ENCODE measurements at regions of chr12 and their contacts with region 1.

Region 1: DNA sequence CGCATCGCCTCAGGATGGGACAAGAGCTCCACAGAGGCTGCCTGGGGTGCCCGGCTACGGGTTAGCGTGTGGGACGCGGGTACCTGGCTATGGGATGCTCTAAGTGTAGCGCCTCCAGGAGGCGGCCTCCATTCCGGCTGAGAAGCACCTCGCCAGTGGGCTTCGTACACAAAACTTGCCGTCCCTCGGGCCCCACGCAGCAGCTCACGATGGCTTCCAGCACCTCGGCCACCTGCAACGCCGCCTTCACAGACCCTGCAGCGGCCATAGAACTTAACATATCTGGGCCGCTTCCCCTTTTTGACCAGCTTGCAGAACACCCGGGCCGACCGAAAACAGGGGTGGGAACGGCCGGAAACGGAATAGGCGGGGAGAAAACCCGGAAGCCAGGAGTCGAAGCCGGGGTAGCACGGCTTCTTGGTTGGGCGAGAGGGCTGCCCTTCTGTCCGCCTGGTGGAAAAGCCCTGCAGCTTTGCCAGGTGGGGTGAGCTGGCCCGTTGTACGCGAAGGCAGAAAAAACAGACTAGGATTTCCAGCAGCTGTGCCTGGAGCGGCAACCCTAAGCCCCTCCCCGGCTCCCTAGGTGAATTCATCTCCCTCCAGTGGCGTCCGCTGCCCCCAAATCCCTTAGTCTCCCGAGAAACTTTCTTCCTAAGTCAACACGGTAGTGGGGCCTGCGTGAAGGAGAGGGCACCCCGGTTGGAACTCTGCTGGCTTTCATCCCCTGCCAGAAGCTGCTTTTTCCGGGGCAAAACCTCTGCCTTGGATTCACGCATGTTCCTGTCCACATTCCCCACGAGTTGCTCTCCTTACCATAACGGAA is at the start of gene BBS10:
- DNase-seq: peak; percentile 92
- H3K4me3 Mint-ChIP-seq: peak within 1 kb of the TSS; percentile 90
- H3K27ac Mint-ChIP-seq: peak within 1 kb of the TSS; percentile 86
- H3K4me1 Mint-ChIP-seq: peaks cover 22% of the 10 kb centered on the region
- H3K27me3 Mint-ChIP-seq: no peaks in the 10 kb centered on the region
- total RNA-seq, gene BBS10: 3.3 TPM

Region 2: GRCh38 chr12:75334384-75335030 is 1013.8 kb before region 1 on chr12 and contains the start of gene GLIPR1L1:
- CTCF ChIA-PET with region 1: no interaction called
- intact Hi-C with region 1: loop called (anchors 5 kb)
- DNase-seq: peak; percentile 92
- H3K4me3 Mint-ChIP-seq: peak within 1 kb of the TSS; percentile 44
- H3K27ac Mint-ChIP-seq: no peak within 1 kb of the TSS
- H3K4me1 Mint-ChIP-seq: peaks cover 18% of the 10 kb centered on the region
- H3K27me3 Mint-ChIP-seq: peaks cover 32% of the 10 kb centered on the region
- total RNA-seq, gene GLIPR1L1: not detected

Region 3: GRCh38 chr12:75511116-75512048 is 836.9 kb before region 1 on chr12 and contains the start of gene KRR1:
- CTCF ChIA-PET with region 1: no interaction called
- intact Hi-C with region 1: loop called (anchors 1 kb)
- DNase-seq: peak; percentile 95
- H3K4me3 Mint-ChIP-seq: peak within 1 kb of the TSS; percentile 95
- H3K27ac Mint-ChIP-seq: peak within 1 kb of the TSS; percentile 98
- H3K4me1 Mint-ChIP-seq: peaks cover 29% of the 10 kb centered on the region
- H3K27me3 Mint-ChIP-seq: no peaks in the 10 kb centered on the region
- total RNA-seq, gene KRR1: 81.1 to 83.9 TPM

Region 4: DNA sequence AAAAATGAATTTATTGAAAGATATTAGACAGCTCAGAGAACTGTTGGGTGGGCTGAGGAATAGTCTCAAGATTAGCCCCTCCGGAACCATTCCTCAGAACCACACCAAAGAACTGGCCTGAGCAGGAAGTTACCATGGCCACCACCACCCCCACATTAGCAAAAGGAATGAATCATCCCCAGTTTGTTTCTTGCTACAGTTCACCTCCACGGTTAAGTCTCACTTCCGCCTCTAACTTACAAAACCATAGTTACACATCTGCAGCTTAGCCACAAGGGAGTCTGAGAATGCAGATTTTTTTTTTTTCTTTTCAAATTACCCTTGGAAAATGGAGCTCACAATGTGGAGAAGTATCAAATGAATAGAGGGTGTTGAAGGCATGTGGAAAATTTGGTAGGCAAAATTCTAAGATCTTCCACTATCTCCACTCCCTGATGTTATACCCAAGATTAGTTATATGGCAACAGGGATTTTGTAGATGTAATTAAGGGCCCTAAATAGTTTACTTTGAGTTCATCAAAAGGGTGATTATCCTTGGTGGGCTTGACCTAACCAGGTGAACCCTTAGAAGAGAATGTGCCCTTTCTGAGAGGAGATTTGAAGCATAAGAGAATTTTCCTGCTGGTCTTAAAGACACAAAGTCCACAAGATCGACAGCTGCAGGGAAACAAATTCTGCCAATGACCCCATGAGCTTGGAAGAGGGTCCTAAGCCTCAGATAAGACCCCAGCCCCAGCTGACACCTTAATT is 707.1 kb before region 1 on chr12:
- CTCF ChIA-PET with region 1: no interaction called
- intact Hi-C with region 1: loop called (anchors 5 kb)
- DNase-seq: peak; percentile 26
- H3K4me3 Mint-ChIP-seq: no peak overlapping the region
- H3K27ac Mint-ChIP-seq: no peak overlapping the region
- H3K4me1 Mint-ChIP-seq: peaks cover 21% of the 10 kb centered on the region
- H3K27me3 Mint-ChIP-seq: peaks cover 12% of the 10 kb centered on the region

Region 5: DNA sequence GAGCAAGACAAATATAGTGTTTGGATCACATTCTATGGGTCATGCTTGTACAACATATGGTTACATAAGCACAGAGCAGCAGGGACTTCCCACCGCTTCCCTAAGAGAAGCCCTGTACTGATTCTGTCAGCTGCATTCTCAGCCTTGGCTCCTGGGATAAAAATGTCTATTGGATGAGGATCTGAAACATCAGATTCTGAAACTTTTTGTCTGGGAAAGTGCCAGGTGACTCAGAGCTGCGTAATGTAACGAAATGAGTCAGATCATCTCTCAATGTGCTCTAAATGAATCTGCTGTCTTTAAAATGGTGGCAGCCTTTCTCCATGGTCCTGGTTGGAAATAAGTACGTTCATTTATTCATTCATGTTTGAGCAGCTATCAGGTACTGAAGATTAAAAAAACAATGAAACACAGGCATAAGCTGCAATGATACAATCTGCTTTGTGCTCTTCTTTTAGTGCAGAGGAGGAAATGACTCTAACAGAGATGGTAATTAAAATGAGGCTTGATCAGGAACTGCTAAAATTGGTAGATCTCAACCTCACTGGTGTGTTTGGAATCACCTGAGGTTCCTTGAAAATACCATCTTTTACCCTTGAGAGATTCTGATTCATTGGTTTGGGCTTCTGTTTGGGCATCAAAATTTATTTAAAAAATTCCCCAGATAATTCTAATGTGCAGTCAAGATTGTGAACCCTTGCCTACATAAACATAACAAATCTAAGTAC is 164.7 kb before region 1 on chr12:
- CTCF ChIA-PET with region 1: no interaction called
- intact Hi-C with region 1: loop called (anchors 1 kb)
- DNase-seq: peak; percentile 76
- H3K4me3 Mint-ChIP-seq: no peak overlapping the region
- H3K27ac Mint-ChIP-seq: no peak overlapping the region
- H3K4me1 Mint-ChIP-seq: peaks cover 12% of the 10 kb centered on the region
- H3K27me3 Mint-ChIP-seq: peaks cover 46% of the 10 kb centered on the region

Region 6: DNA sequence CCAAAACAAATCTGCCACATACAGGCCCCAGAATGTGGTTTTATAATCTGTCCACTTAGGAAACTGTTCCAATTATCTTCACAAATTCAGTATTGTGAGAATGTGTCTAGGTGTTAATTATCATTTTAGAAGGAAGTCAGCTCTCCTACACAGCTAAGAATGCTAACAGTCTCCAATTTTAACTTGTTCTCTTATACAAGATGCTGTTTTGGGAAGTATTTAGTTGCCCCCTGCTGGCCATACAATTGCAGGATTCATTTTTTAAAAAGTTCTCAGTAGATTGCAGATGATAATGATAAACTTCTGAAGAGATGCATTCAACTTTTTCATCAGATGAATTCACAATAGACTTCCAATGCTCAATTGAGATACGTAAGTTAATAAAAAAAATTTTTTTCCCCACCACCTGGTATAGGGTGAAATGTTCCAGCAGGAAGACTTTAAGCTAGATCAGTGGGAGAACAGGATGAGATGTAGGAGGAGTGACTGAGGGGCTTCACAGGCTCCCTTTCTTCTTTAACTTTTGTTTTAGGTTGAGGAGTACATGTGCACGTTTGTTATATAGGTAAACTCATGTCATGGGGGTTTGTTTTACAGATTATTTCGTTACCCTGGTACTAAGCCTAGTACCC is 238.6 kb after region 1 on chr12:
- CTCF ChIA-PET with region 1: interaction called, 4 read pairs
- intact Hi-C with region 1: loop called (anchors 1 kb)
- DNase-seq: peak; percentile 56
- H3K4me3 Mint-ChIP-seq: no peak overlapping the region
- H3K27ac Mint-ChIP-seq: no peak overlapping the region
- H3K4me1 Mint-ChIP-seq: no peaks in the 10 kb centered on the region
- H3K27me3 Mint-ChIP-seq: no peaks in the 10 kb centered on the region

Measured in activated naive CD4-positive, alpha-beta T cell treated with anti-CD3 and anti-CD28 coated beads for 36 hours (primary cell).